ENCODE measurements at regions of chr1 and their contacts with region 1.

Region 1: GRCh38 chr1:202710070-202711045 is at the start of gene SYT2:
- DNase-seq: peak; percentile 48 to 83
- H3K4me3 ChIP-seq: peak within 1 kb of the TSS; percentile 39
- H3K4me1 ChIP-seq: no peaks in the 10 kb centered on the region
- H3K27me3 ChIP-seq: peaks cover 31% of the 10 kb centered on the region

Region 2: DNA sequence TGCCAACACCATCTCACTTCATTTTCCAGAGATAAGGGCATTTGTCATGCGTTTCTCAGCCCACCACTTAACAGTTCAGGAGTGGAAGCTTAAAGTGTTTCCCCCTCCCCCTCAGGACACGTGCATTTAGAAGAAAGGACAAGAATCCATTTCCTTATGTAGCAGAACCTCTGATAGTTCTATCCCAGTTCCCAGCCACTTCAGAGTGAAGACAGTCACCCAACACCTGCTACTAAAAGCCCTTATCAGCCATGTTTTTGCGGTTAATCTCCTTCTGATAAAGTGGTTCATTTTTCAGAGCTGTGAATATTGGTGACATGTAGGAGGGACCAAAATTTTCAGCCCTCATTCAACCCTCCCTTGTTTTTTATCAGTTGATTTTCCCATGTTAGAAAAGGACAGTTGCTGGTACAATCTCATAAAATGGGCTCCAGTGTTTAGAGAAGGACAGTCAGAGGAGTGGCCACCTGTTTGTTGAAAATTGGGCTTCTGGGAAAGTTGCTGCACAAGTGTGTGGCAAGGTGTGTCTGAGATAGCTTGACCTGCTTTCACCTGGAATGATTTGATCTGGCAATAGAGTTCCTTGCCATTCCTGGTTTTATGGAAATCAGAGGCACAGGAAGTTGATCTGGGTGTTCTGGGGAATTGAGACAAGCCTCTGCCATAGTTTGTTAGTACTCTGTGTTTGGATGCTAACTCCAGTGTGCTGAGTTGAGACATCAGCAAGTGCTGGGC is 247.8 kb before region 1 on chr1:
- in situ Hi-C with region 1: loop called (anchors 25 kb)
- DNase-seq: no peak
- H3K4me3 ChIP-seq: no peak overlapping the region
- H3K4me1 ChIP-seq: peaks cover 10% of the 10 kb centered on the region
- H3K27me3 ChIP-seq: no peaks in the 10 kb centered on the region